GM10248 (cell line): ENCODE measurements at regions of chr5 and their contacts with region 1.

Region 1: GRCh38 chr5:95043234-95043633 is 241.7 kb downstream of the MCTP1 start:
- DNase-seq: no peak
- CTCF ChIP-seq: no peak

Region 2: GRCh38 chr5:95053253-95053652 is 10.0 kb after region 1 on chr5:
- CTCF ChIA-PET with region 1: interaction called, 45 read pairs
- POLR2A ChIA-PET with region 1: no interaction called
- DNase-seq: no peak
- CTCF ChIP-seq: no peak